SK-N-SH (cell line): ENCODE measurements at regions of chr15 and their contacts with region 1.

Region 1: DNA sequence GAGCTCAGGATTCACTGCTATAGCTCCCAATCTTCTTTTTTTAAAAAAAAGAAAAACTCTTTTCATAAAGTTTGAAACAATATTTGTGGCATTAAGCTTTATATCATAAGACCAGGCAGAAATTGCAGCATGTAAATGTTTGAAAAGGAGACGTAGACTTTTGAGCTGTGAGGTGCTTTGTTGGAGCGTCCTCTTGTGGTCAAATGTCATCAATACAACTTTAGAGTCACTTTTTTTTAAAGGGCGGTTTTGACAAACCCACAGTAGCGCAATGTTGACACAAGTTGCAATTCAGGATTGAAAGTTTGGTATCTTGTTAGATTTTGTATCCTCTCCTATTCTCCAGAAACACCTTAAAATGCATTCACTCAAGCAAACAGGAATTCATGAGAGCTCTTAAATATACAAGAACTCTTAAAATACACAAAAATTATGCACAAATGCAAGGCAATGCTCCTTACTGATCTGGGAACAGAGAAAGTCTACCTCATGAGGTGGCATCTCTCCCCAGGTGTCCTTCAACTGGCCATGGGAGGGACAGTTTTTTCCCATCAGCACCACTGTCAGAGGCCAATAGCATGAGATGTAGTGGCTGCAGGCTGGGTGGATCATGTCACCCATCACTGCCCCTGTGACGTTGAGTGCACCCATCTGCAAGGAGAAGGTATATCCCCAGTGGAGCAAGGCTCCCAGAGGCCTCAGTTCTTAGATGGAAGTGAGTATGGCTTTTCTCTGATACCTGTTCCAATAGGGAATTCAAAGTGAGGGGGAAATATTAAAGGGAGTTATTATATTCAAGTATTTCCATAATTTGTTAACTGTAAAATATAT is 70.7 kb downstream of the ANXA2 start:
- DNase-seq: peak; percentile 40
- H3K4me3 ChIP-seq: no peak overlapping the region; a peak in 1 of 4 replicates
- H3K27ac ChIP-seq: no peak overlapping the region
- H3K4me1 ChIP-seq: peaks cover 0 to 9% of the 10 kb centered on the region in 2 experiments; a peak in 2 of 4 replicates
- H3K27me3 ChIP-seq: peaks cover 28% of the 10 kb centered on the region; the same call in 1 of the 2 replicates
- CTCF ChIP-seq: peak; percentile 95
- EP300 ChIP-seq: no peak
- RAD21 ChIP-seq: peak; percentile 96

Region 2: GRCh38 chr15:59725172-59725486 is 601.9 kb before region 1 on chr15:
- CTCF ChIA-PET with region 1: interaction called, 61 read pairs
- POLR2A ChIA-PET with region 1: no interaction called
- DNase-seq: no peak
- H3K4me3 ChIP-seq: no peak overlapping the region; a peak in 1 of 4 replicates
- H3K27ac ChIP-seq: no peak overlapping the region
- H3K4me1 ChIP-seq: no peaks in the 10 kb centered on the region
- H3K27me3 ChIP-seq: peaks cover 55% of the 10 kb centered on the region; the same call in 1 of the 2 replicates
- CTCF ChIP-seq: no peak
- EP300 ChIP-seq: no peak
- RAD21 ChIP-seq: no peak

Region 3: GRCh38 chr15:59751552-59752413 is 575.3 kb before region 1 on chr15:
- CTCF ChIA-PET with region 1: interaction called, 17 read pairs
- POLR2A ChIA-PET with region 1: no interaction called
- DNase-seq: no peak
- H3K4me3 ChIP-seq: no peak overlapping the region
- H3K27ac ChIP-seq: no peak overlapping the region
- H3K4me1 ChIP-seq: no peaks in the 10 kb centered on the region
- H3K27me3 ChIP-seq: peaks cover 6% of the 10 kb centered on the region; the same call in 1 of the 2 replicates
- CTCF ChIP-seq: peak; percentile 27; the same call in 1 of the 2 replicates
- EP300 ChIP-seq: no peak
- RAD21 ChIP-seq: peak; percentile 47

Region 4: DNA sequence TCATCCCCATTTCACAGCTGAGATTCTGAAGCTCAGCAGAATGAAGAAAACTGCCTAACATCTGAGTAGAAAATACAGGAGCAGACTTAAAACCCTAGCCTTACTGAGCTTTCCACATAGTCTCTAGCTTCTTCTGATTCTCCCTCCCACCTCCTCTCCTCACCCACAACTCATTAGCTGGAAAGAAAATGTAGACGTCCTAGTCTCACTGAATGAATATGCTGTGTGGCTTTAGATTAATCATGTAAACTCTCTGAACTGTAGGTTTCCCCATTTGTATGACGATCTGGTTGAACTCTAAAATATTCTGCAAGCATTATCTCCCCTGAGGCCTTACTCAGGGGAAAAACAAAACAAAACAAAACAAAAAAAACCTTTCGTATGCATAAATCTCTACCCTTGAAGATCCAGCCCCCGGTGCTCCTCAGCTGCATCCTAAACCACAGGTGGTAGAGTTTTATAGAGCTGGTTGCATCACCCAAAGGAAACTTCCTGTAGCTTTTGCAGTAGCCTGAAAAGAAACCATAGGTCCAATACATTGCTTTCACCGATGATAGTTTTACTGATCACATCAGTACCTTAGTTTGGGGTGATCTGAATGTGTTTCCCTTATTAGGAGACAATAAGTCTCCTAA is 282.3 kb before region 1 on chr15:
- CTCF ChIA-PET with region 1: no interaction called
- POLR2A ChIA-PET with region 1: no interaction called
- DNase-seq: no peak
- H3K4me3 ChIP-seq: no peak overlapping the region
- H3K27ac ChIP-seq: no peak overlapping the region
- H3K4me1 ChIP-seq: no peaks in the 10 kb centered on the region
- H3K27me3 ChIP-seq: peaks cover 7% of the 10 kb centered on the region; the same call in 1 of the 2 replicates
- CTCF ChIP-seq: no peak
- EP300 ChIP-seq: no peak
- RAD21 ChIP-seq: no peak

Region 5: DNA sequence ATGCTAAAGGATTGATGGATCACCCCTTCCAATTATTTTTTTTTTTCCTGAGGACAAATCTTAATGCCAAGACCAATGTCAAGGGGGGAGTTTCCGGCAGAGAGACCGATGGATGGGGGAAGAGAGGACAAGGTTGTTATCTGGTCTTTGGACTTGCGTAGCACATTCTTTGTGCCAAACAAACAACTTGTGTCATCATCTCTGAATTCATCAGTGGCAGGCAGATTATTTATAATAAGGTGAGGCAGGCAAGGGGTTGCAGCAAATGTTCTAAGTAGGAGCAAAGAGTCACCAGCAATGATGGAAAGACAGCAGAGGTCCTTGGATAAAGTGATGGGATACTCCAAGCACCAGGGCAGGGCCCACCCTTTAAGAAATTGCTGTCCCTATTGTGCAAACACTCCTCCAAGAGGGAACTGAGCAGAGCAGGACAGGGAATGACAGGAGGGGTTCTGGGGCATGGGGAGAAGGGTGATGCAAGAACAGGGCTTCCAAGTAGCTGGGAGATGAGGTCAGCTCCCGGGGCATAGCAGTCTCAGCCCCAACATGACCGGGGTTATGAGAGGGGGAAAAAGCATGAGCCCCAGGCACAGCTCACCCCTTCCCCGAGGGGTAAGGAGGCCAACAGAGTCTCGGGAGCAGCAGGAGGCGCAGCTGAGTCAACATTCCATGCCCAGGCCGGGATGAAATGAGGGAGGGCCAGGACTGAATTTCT is 13.3 kb after region 1 on chr15:
- CTCF ChIA-PET with region 1: interaction called, 31 read pairs
- POLR2A ChIA-PET with region 1: no interaction called
- DNase-seq: no peak
- H3K4me3 ChIP-seq: no peak overlapping the region
- H3K27ac ChIP-seq: no peak overlapping the region
- H3K4me1 ChIP-seq: peaks cover 0 to 4% of the 10 kb centered on the region in 2 experiments; a peak in 1 of 4 replicates
- H3K27me3 ChIP-seq: no peaks in the 10 kb centered on the region
- CTCF ChIP-seq: peak; percentile 36
- EP300 ChIP-seq: no peak
- RAD21 ChIP-seq: no peak

Region 6: DNA sequence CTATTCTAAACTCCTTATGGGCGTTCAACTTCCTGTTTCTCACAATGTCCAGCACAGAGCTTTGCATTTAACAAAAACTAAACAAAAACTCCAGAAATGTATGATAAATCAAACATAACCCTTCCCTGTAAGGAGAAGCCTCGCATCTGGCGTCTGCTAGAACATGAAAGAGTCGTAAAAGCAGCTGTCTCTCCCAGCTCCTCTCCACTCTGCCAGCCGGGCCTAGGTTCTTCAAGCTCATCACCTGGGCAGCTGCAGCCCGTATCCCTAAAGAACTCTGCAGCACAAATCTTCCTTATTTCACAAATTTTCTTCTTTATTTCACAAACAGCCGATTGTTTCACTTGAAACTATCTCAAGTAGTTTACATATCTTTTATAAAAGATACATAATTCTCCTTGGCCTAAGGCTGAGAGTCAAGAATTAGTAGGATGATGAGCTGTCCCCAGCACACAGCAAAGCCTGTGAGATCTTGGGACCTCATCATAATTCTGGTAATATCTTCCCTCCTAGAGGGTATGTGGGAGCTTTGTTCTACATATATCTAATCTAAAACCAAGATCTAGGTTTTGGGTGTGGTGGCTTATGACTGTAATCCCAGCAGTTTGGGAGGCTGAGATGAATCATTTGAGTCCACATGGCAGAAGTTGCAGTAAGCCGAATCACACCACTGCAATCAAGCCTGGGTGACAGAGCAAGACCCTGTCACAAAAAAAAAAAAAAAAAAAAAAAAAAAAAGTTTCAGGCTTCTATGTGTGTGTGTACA is 35.5 kb after region 1 on chr15:
- CTCF ChIA-PET with region 1: interaction called, 30 read pairs
- POLR2A ChIA-PET with region 1: no interaction called
- DNase-seq: no peak
- H3K4me3 ChIP-seq: no peak overlapping the region
- H3K27ac ChIP-seq: peak overlapping the region; percentile 65 to 97
- H3K4me1 ChIP-seq: peaks cover 27 to 38% of the 10 kb centered on the region in 2 experiments
- H3K27me3 ChIP-seq: no peaks in the 10 kb centered on the region
- CTCF ChIP-seq: no peak
- EP300 ChIP-seq: 0 out of 4 replicates have a peak, but pooled peaks of 1 of the 2 experiments have one; percentile 12
- RAD21 ChIP-seq: no peak